Right ventricle myocardium superior (tissue), 1 donor: ENCODE measurements at regions of chr10 and their contacts with region 1.

Region 1: DNA sequence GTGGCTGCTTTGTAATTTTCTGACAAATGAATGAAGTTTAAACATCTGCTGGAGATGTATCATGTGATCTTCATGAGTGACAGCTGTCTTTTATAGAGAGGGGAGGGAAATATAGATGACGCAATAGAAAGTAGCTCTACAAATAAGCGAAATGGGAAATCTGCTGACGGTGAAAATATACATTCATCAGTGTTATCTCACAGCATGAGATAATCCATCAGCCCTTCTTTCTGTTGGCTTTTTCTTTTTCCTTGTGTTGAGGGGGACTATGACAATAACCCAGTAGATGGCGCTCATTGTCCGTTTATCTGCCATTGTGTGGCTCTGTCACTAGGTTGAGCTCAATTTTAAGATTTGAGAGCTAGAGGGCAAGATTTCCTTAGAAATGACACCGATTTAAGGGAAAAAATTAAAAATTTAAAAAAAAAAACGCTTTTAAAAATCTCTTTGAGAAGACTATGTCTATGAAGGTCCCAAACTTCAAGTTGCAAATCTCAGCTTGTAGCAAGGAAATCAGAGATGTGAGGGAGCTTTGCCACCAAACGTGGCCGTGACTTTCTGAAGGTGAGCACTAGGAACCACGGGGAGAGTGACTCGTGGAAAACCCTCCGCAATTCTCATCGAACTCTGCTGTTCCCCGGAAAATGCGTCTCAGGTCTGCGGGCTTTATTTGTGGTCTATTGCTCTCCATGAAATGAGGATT is 114.6 kb upstream of the SFMBT2 start:
- DNase-seq: no peak
- ATAC-seq: peak; percentile 92

Region 2: DNA sequence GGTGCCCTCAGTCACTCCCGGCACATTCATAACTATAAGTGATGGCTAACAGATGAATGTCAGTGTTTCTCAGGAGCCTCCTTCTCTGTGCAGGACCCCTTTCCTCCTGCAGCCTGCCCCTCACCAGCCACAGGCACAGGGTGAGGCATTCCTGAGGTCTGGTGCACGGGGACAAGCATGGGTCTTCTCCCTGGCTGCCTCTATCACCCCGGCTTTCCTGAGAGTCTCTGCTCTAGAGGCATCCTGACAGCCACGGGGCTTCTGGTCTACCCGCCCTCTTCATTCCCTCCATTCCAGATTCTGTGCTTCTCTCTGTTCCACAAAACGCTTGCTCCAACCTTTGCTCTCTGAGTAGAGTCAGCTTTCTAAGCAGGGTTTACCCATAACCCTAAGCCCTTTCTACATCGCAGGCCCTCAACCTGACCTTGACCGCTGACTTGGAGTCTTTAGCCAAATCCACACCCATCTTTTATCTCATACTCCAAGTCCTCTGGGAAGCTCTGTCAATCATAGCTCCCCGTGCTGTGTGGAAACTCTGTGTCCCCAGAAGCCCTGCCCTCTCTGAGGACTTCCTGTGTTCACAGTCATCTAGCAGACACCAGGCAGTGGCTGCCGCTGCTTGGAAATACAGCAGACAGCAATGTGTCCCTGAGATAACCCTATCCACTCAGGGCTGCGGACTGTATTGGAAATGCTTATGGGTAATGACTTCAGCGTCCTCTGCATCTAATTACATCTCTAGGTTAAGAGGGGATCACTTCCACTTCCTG is 273.6 kb before region 1 on chr10:
- intact Hi-C with region 1: no loop called
- DNase-seq: peak; percentile 69
- ATAC-seq: peak; percentile 95

Region 3: DNA sequence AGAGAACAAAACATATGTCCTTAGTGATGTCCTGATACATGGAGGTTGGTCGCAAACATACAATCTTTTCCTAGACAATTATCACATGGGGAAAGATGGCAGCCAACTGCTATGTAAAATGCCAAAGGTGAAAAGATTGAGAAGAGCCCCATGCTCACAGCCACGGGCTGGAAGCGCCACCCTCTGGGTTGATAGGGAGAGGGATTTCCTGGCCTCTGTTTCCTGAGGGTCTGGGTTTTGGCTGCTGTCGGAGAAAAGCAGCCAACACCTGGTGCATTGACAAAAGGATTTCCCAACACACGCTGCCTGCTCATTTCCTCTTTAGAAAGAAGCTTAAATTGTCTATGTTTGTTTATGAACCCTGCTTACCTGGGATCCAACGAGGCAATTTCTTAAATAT is 97.5 kb after region 1 on chr10:
- intact Hi-C with region 1: loop called (anchors 5 kb)
- DNase-seq: no peak
- ATAC-seq: peak; percentile 46

Region 4: GRCh38 chr10:7687228-7687907 is 161.9 kb after region 1 on chr10:
- intact Hi-C with region 1: loop called (anchors 2 kb)
- DNase-seq: peak; percentile 86
- ATAC-seq: peak; percentile 98